Activated naive CD4-positive, alpha-beta T cell treated with anti-CD3 and anti-CD28 coated beads for 36 hours (primary cell): ENCODE measurements at regions of chr3 and their contacts with region 1.

Region 1: DNA sequence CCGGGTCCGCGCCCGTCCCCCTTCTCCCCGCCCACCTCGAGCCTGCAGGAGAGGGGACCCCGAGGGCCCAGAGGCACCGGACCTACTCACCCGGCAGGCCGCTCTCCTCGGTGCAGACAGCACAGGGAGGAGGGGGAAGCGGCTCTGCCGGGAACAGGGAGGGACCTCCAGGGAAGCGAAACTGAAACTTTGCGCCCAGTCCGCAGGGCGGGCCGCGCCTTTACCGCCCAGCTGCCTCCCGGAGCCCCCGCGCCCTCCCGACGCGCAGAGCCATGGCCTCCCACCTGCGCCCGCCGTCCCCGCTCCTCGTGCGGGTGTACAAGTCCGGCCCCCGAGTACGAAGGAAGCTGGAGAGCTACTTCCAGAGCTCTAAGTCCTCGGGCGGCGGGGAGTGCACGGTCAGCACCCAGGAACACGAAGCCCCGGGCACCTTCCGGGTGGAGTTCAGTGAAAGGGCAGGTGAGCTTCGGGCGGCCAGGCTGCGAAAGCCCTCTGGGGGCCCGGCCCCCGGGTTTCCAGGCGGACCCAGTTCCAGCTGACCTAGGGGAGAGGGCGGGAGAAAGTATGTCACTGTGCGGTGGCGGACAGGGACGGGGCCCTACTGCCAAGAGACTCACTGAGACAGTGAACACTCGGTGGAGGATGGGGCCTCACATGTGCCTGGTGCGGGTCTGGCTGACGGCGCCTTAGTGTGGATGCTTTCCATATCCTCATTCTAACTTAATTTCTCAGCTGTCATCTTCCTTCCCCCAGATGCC is at the starts of genes DTX3L and PARP9:
- DNase-seq: peak; percentile 75
- H3K4me3 Mint-ChIP-seq: peak within 1 kb of the TSS; percentile 87
- H3K27ac Mint-ChIP-seq: peak within 1 kb of the TSS; percentile 93
- H3K4me1 Mint-ChIP-seq: peaks cover 70% of the 10 kb centered on the region
- H3K27me3 Mint-ChIP-seq: no peaks in the 10 kb centered on the region
- total RNA-seq, gene DTX3L: 22.3 to 24.5 TPM
- total RNA-seq, gene PARP9: 20.4 to 21.1 TPM

Region 2: DNA sequence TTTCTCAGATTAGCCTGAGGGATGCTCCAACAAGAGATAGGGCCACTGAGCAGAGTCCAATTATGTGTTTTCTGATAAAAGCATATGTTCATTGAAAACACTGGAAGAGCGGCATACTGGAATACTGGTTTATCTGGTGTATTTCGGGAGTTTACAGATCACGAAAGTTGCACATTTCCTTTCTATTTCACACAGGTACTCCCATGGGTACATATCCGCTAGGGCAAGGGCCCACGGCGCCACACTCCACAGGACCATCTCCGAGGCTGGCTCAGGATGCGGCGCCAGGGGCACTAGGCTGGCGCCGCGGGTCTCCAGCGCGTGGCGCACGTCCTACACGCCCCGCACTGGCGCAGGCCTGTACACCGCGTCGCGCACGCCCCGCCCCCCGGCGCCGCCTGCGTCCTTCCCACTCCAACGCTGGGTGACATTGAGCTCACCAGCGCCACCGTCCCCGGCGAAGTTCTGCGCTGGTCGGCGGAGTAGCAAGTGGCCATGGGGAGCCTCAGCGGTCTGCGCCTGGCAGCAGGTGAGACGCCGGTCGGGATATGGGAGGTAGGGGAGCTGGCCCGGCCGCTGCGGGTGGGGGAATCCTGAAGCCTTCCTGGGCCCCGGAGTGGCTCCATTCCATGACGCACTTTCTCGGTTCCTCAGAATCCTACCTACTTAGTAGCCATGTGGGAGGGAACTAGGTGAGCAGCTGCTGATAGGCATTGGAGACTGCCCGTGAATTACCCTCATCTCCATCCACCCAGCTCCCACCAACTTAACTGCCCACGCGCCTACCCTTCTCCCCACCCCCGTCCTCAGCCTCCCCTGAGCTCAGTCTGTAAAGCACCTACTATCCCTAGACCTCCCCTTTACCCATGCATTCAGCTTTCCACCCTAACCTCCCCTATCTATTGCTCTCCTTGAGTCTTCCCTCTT is 180.3 kb before region 1 on chr3 and contains the start of gene FAM162A:
- CTCF ChIA-PET with region 1: no interaction called
- intact Hi-C with region 1: loop called (anchors 1 kb)
- DNase-seq: peak; percentile 93
- H3K4me3 Mint-ChIP-seq: peak within 1 kb of the TSS; percentile 90
- H3K27ac Mint-ChIP-seq: peak within 1 kb of the TSS; percentile 93
- H3K4me1 Mint-ChIP-seq: peaks cover 62% of the 10 kb centered on the region
- H3K27me3 Mint-ChIP-seq: no peaks in the 10 kb centered on the region
- total RNA-seq, gene FAM162A: 111 to 112 TPM

Region 3: DNA sequence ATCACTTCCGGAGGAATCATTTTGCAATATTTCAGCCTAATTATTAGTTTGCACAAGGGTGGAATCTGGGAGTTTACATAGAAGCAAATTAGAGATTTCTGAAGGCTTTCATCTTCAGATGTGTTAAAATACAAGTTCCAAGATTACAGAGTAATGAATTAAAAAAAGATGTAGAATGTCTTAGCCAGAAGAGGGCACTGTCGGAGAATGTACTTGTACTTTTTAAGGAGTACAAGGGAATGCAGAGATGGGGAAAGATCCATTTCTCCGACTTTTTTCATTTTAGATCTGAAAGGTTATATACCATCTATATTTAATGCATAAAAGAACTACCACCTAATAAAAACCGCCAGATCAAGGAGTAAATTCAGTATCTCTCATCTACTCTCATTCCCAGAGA is 105.3 kb before region 1 on chr3:
- CTCF ChIA-PET with region 1: no interaction called
- intact Hi-C with region 1: loop called (anchors 2 kb)
- DNase-seq: no peak
- H3K4me3 Mint-ChIP-seq: no peak overlapping the region
- H3K27ac Mint-ChIP-seq: no peak overlapping the region
- H3K4me1 Mint-ChIP-seq: peaks cover 8% of the 10 kb centered on the region
- H3K27me3 Mint-ChIP-seq: no peaks in the 10 kb centered on the region

Region 4: GRCh38 chr3:122793568-122794416 is 229.5 kb after region 1 on chr3 and contains the start of gene HSPBAP1:
- CTCF ChIA-PET with region 1: no interaction called
- intact Hi-C with region 1: loop called (anchors 5 kb)
- DNase-seq: peak; percentile 92
- H3K4me3 Mint-ChIP-seq: peak within 1 kb of the TSS; percentile 86
- H3K27ac Mint-ChIP-seq: peak within 1 kb of the TSS; percentile 80
- H3K4me1 Mint-ChIP-seq: peaks cover 30% of the 10 kb centered on the region
- H3K27me3 Mint-ChIP-seq: no peaks in the 10 kb centered on the region
- total RNA-seq, gene HSPBAP1: 3.0 to 3.2 TPM

Region 5: DNA sequence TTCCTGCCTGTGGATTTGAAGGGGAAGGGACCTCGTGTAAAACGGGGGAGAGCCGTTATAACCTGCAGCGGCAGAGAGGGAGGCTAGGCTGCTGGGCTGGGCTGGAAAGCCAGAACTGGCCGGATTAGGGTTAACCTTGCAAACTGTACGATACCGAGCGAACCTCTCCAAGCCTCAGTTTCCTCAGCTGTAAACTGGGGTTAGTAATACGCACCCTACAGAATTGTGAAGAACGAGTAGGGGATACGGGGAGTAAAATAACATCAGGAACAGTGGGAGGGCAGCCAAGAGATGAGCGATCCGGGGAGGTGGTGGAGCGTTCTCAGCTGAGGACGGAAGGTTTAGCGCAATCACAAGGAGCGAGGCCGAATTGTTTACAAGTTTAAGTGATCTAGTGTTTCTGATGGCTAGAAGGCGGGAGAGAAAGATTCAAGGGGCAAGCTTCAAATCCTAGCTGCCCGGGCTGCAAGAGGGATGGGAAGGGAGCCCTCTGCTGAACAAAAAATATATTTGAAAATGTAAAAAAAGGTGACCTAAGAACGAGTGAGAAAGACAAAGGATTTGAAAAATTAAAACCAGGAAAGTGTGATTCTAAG is 464.0 kb after region 1 on chr3:
- CTCF ChIA-PET with region 1: no interaction called
- intact Hi-C with region 1: loop called (anchors 1 kb)
- DNase-seq: peak; percentile 36
- H3K4me3 Mint-ChIP-seq: peak overlapping the region; percentile 55
- H3K27ac Mint-ChIP-seq: no peak overlapping the region
- H3K4me1 Mint-ChIP-seq: peaks cover 11% of the 10 kb centered on the region
- H3K27me3 Mint-ChIP-seq: peaks cover 55% of the 10 kb centered on the region